MCF 10A (cell line): ENCODE measurements at regions of chrX and their contacts with region 1.

Region 1: GRCh38 chrX:133792198-133792953 is 193.0 kb downstream of the GPC3 start:
- DNase-seq: peak; percentile 83
- H3K4me3 Mint-ChIP-seq: peak overlapping the region; percentile 65
- H3K27ac Mint-ChIP-seq: no peak overlapping the region
- H3K4me1 Mint-ChIP-seq: no peaks in the 10 kb centered on the region
- H3K27me3 Mint-ChIP-seq: peaks cover 42% of the 10 kb centered on the region
- CTCF ChIP-seq: peak; percentile 99

Region 2: GRCh38 chrX:133776072-133776471 is 16.3 kb before region 1 on chrX:
- CTCF ChIA-PET with region 1: interaction called, 15 read pairs
- POLR2A ChIA-PET with region 1: no interaction called
- intact Hi-C with region 1: no loop called
- DNase-seq: peak; percentile 34
- H3K4me3 Mint-ChIP-seq: no peak overlapping the region
- H3K27ac Mint-ChIP-seq: no peak overlapping the region
- H3K4me1 Mint-ChIP-seq: no peaks in the 10 kb centered on the region
- H3K27me3 Mint-ChIP-seq: peaks cover 73% of the 10 kb centered on the region
- CTCF ChIP-seq: peak; percentile 57

Region 3: GRCh38 chrX:133921764-133922389 is 129.5 kb after region 1 on chrX:
- CTCF ChIA-PET with region 1: interaction called, 47 read pairs
- POLR2A ChIA-PET with region 1: no interaction called
- intact Hi-C with region 1: loop called (anchors 1 kb)
- DNase-seq: peak; percentile 48
- H3K4me3 Mint-ChIP-seq: no peak overlapping the region
- H3K27ac Mint-ChIP-seq: no peak overlapping the region
- H3K4me1 Mint-ChIP-seq: peaks cover 5% of the 10 kb centered on the region
- H3K27me3 Mint-ChIP-seq: peaks cover 66% of the 10 kb centered on the region
- CTCF ChIP-seq: peak; percentile 54

Region 4: GRCh38 chrX:134026565-134027311 is 234.4 kb after region 1 on chrX:
- CTCF ChIA-PET with region 1: interaction called, 65 read pairs
- POLR2A ChIA-PET with region 1: no interaction called
- intact Hi-C with region 1: loop called (anchors 1 kb)
- DNase-seq: peak; percentile 70
- H3K4me3 Mint-ChIP-seq: no peak overlapping the region
- H3K27ac Mint-ChIP-seq: no peak overlapping the region
- H3K4me1 Mint-ChIP-seq: no peaks in the 10 kb centered on the region
- H3K27me3 Mint-ChIP-seq: peaks cover 44% of the 10 kb centered on the region
- CTCF ChIP-seq: peak; percentile 42

Region 5: DNA sequence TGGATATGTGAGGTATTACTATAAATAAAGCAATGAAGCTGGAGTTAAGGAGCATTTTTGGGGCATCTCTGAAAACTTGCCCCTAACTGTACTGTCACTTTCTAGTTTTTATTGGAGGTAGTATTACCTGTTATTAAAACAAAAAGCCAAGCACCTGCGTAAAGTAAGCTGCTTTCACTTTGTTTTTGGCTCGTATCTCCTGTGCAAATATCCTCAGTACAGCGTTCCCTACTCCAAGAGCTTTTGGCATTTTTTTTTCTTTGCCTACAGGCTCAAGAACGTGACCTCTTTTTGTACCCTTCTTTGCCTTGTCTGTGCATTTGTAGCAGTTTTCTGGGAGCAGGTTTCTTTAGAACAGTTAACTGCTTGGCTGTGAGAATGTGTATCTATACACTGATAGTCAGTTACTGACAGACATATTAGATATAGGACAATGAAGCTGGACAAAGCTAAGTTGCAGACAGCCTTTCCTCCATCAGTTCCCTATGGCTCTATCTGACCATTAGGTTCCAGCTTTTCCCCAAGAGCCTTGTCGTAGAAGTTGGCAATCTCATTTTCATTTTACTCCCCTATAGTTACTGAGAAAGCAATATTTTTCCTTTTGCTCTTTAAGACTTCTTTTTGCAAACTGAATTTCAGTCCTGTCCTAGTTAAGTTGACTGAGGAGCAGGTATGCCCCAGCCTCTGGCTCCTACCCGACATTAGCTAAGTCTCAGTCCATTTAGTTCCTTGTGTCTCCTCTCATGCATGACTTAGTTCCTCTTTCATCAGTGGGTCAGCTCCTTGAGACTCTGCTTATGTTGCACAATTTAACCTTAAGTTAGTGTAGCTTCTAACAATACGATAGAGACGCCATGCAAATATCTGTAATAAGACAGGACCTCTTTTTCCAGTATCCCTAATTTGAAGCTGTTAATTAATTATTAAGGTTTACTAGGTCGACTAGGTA is 596.1 kb after region 1 on chrX:
- CTCF ChIA-PET with region 1: interaction called, 11 read pairs
- POLR2A ChIA-PET with region 1: no interaction called
- intact Hi-C with region 1: no loop called
- DNase-seq: no peak
- H3K4me3 Mint-ChIP-seq: no peak overlapping the region
- H3K27ac Mint-ChIP-seq: no peak overlapping the region
- H3K4me1 Mint-ChIP-seq: no peaks in the 10 kb centered on the region
- H3K27me3 Mint-ChIP-seq: peaks cover 45% of the 10 kb centered on the region
- CTCF ChIP-seq: no peak